A549 (cell line): ENCODE measurements at regions of chr1 and their contacts with region 1.

Region 1: GRCh38 chr1:223123011-223123610 is 19.9 kb downstream of the TLR5 start:
- DNase-seq: no peak
- ATAC-seq: no peak
- H3K4me3 ChIP-seq: no peak overlapping the region
- H3K27ac ChIP-seq: no peak overlapping the region
- H3K4me1 ChIP-seq: no peaks in the 10 kb centered on the region
- CTCF ChIP-seq: no peak
- EP300 ChIP-seq: no peak
- POLR2A ChIP-seq: no peak
- RAD21 ChIP-seq: no peak

Region 2: GRCh38 chr1:222736972-222737371 is 386.1 kb before region 1 on chr1 and contains the start of gene FAM177B:
- CTCF ChIA-PET with region 1: interaction called, 20 read pairs
- POLR2A ChIA-PET with region 1: no interaction called
- DNase-seq: no peak
- ATAC-seq: peak in 1 of 2 experiments; percentile 25; a peak in 1 of 6 replicates
- H3K4me3 ChIP-seq: no peak within 1 kb of the TSS
- H3K27ac ChIP-seq: no peak within 1 kb of the TSS
- H3K4me1 ChIP-seq: peaks cover 9% of the 10 kb centered on the region; the same call in 2 of the 3 replicates
- CTCF ChIP-seq: no peak
- EP300 ChIP-seq: no peak
- POLR2A ChIP-seq: no peak
- RAD21 ChIP-seq: no peak
- polyA plus RNA-seq, gene FAM177B: not detected in 2 replicates

Region 3: DNA sequence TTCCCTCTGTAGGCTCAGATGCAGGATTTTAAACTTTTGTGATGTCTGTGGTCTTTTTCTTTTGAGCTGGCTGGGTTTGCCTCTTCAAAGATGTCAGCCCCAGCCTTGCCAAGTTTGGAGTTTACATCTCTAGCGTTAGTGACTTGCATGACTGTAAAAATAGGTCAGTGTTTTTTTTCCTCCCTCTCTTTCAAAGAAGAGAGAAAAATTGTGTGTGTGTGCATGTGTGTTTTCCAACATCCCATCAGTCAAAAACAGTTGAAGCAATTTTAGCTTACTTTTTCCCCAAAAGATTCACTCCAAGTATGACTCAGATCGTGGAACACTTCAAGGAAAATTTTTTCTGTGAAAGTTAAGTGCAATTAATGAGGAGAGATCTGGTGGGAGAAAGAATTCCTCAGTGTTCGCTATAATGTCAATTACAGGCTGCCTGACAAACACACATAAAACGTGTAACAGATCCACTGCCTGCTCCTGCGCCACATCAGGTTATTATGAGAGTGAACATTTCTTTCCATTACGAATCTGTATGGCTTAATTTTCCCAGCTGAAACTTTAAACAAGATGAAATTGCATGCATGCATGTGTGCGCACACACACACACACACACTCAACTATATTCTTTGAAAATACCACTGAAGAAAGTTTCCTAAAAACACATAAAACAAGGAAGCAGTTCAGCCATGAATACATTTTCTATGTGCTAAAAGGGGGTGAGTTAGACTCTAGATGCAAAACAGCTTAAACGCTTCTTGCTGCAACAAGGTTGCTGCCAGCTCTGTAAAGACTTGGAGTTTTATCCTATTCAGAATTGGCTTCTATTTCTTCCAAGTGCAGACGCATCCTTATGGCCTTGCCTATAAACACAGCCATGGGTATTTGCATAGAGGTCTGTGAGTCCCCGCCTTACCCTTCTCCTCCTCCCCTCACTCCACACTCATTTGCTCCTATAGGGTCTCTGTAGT is 35.5 kb before region 1 on chr1:
- CTCF ChIA-PET with region 1: interaction called, 42 read pairs
- POLR2A ChIA-PET with region 1: no interaction called
- DNase-seq: no peak
- ATAC-seq: no peak
- H3K4me3 ChIP-seq: no peak overlapping the region
- H3K27ac ChIP-seq: no peak overlapping the region
- H3K4me1 ChIP-seq: no peaks in the 10 kb centered on the region
- CTCF ChIP-seq: no peak
- EP300 ChIP-seq: no peak
- POLR2A ChIP-seq: no peak
- RAD21 ChIP-seq: no peak

Region 4: DNA sequence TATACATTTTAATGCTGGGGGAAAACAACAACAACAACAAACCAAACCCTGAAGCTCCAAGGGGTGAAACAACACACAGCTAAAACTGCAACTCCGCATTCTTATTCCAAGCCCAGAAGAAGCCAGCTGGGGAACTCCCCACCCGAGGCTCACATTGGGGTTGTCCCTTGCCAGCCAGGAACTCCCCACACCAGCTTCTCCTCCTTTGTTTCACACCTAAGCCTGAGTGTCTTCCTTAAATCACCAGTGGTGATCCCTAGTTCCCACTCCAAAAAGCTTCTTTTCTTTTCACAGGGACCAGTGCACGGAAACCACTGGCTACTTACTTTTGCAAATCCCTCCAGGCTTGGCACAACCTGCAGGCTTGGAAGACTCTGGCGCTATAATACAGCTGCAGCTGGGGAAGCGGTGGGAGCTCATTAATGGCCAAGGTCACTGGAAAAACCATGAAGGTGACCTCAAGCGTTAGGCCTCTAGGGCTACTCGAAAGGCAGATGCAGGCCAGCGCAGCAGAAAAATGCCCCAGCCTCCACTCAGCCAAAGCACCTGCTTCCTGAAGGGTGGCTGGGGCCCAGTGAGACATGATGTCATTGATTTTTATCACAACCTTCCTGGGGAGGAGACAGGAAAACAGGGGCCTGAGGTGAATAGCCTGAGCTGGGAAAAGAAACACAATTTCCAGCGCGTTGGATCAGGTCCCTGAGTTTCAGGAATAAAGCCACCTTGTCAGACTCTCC is 20.1 kb before region 1 on chr1:
- CTCF ChIA-PET with region 1: interaction called, 21 read pairs
- POLR2A ChIA-PET with region 1: no interaction called
- DNase-seq: no peak
- ATAC-seq: no peak
- H3K4me3 ChIP-seq: no peak overlapping the region
- H3K27ac ChIP-seq: no peak overlapping the region
- H3K4me1 ChIP-seq: no peaks in the 10 kb centered on the region
- CTCF ChIP-seq: no peak
- EP300 ChIP-seq: no peak
- POLR2A ChIP-seq: no peak
- RAD21 ChIP-seq: no peak

Region 5: DNA sequence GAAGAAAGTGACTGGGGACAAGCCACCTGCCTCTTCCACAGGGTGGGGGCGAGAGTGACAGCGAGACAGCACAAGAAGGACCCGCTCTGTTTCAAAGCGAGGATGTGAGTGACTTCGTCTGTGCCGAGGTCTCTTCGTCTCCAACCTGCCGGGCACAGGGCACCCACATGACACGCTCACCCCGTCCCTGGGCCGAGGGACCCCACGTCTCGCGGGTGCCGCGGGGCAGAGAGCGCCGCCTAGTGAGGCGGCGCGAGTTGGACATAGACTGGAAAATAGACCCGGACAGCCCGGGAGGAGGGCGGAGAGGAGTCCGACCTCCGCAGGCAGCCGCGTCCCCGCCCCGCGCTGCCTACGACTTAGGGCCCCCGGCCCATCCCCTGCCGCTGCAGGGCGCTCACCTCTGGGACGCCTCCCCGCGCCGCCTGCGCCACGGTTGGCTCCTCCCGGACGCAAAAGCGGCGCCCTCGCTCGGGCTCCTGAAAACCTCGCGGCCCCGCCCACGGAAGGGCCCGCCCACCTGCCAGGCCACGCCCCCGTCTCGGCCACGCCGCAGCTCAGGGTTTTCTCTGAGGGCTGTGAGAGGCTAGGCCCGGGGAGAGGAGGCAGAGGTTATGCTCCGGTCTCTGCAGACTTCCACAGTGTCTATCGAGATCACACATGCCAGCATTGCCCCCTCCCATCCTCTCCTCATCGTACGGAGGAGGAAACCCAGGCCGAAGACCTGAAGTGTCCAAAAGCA is 19.9 kb after region 1 on chr1 and contains the start of gene TLR5:
- CTCF ChIA-PET with region 1: interaction called, 77 read pairs
- POLR2A ChIA-PET with region 1: no interaction called
- DNase-seq: peak; percentile 71 to 85
- ATAC-seq: peak; percentile 88 to 96
- H3K4me3 ChIP-seq: peak within 1 kb of the TSS; percentile 48
- H3K27ac ChIP-seq: peak within 1 kb of the TSS; percentile 61 to 82
- H3K4me1 ChIP-seq: peaks cover 7% of the 10 kb centered on the region; the same call in 1 of the 3 replicates
- CTCF ChIP-seq: peak; percentile 82
- EP300 ChIP-seq: no peak
- POLR2A ChIP-seq: peak; percentile 46
- RAD21 ChIP-seq: peak; percentile 1 to 56; a peak in 2 of 5 replicates
- polyA plus RNA-seq, gene TLR5: 1.3 and 1.8 TPM in 2 replicates

Region 6: GRCh38 chr1:223345720-223346119 is 222.6 kb after region 1 on chr1:
- CTCF ChIA-PET with region 1: no interaction called
- POLR2A ChIA-PET with region 1: no interaction called
- DNase-seq: no peak
- ATAC-seq: no peak
- H3K4me3 ChIP-seq: no peak overlapping the region
- H3K27ac ChIP-seq: no peak overlapping the region
- H3K4me1 ChIP-seq: no peaks in the 10 kb centered on the region
- CTCF ChIP-seq: no peak
- EP300 ChIP-seq: no peak
- POLR2A ChIP-seq: no peak
- RAD21 ChIP-seq: no peak